ENCODE measurements at regions of chr1 and their contacts with region 1.

Region 1: DNA sequence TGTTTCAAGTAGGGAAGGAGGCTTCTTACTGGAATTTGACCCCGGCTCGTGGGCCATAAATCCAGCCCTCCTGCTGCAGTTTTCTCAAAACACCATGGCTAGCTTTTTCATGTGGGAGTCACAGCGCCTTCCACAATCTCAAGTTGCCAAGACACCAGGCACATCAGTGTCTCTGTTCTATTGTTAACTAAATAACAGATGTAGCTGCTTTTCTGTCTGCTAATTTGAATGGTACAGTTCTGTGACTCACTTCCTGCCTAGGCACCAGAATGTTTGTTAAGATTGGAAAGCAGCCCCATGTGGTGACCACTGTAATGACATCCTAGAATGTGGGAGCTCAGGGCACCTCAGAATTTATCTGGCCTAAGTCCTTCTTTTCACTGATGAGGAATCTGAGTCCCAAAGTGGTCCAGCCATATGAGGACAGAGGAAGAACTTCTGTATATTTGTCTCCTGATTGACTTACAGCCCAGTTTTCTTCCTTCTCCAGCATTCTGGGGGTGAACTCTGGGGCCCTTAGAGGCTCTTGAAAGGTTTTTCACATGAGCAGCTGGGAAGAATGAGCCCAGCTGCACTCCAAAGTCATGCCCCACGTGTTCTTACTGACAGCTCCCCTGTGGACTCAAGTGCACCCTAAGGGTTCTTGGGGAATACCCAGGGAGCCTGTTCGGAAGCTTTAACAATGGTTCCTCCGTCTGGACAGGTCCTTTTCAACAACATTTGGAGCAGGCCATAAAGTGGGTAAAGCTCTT is 27.5 kb downstream of the TRIM45 start:
- DNase-seq: peak; percentile 63
- ATAC-seq: peak; percentile 99
- H3K4me3 Mint-ChIP-seq: no peak overlapping the region
- H3K27ac Mint-ChIP-seq: peak overlapping the region; percentile 20
- H3K4me1 Mint-ChIP-seq: peaks cover 23% of the 10 kb centered on the region
- H3K27me3 Mint-ChIP-seq: no peaks in the 10 kb centered on the region
- CTCF ChIP-seq: peak; percentile 56

Region 2: GRCh38 chr1:117067533-117068370 is 26.3 kb before region 1 on chr1:
- CTCF ChIA-PET with region 1: interaction called, 19 read pairs
- POLR2A ChIA-PET with region 1: interaction called, 6 read pairs
- intact Hi-C with region 1: no loop called
- DNase-seq: peak; percentile 42
- ATAC-seq: peak; percentile 83
- H3K4me3 Mint-ChIP-seq: no peak overlapping the region
- H3K27ac Mint-ChIP-seq: no peak overlapping the region
- H3K4me1 Mint-ChIP-seq: peaks cover 40% of the 10 kb centered on the region
- H3K27me3 Mint-ChIP-seq: no peaks in the 10 kb centered on the region
- CTCF ChIP-seq: peak; percentile 62

Region 3: DNA sequence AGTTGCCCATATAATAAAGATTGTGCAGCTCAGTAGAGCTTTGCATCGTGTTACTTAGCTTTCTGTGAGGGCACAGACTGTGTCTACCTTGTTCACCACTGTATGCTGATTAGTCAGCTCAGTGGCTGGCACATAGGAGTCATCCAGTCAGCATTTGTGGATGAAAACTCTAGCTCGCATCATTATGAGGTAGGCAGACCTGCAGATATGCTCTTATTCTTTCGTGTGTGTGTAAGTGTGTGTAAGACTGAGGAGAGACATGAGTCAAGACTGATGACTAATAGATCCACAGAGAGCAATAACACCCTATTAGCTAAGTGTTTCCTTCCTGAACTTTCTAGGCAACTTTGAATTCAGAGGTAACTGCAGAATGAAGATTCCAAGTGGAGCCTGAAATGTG is 16.8 kb before region 1 on chr1:
- CTCF ChIA-PET with region 1: interaction called, 27 read pairs
- POLR2A ChIA-PET with region 1: interaction called, 5 read pairs
- intact Hi-C with region 1: no loop called
- DNase-seq: peak; percentile 70
- ATAC-seq: peak; percentile 98
- H3K4me3 Mint-ChIP-seq: no peak overlapping the region
- H3K27ac Mint-ChIP-seq: peak overlapping the region; percentile 76
- H3K4me1 Mint-ChIP-seq: peaks cover 38% of the 10 kb centered on the region
- H3K27me3 Mint-ChIP-seq: no peaks in the 10 kb centered on the region
- CTCF ChIP-seq: no peak

Region 4: DNA sequence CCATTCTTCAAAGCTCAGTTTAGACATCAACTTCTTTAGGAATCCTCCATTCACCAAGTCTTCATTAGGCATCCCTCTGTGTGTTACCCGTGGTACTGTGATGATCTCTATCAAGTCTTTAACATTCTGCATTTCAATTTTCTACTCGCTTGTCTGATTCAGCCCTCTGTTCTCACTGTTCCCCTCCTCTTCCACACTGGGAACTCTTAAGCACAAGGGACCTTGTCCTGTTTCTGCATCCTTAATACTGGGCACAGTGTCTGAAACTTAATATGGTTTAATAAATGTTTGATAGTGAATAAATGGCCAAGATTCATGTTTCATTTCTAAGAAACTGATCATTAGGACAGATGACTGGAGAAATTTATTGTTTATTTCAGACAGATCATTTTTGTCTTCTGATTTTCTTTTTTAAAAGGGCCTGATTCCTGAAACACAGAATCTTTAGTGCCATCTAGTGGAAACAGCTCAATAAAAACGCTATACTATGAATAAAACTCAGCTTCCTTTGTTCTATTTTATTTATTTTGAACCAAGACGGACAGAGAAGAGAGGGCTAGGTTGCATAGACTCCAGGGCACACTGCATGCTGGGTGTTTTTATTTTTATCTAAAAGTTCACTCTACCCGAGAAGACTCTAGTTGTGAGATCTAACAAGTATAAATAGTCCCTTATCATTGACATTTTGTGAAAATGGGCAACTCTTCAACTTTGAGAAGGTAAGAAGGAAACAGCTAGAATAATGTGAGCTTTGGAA is 34.5 kb after region 1 on chr1:
- CTCF ChIA-PET with region 1: interaction called, 21 read pairs
- POLR2A ChIA-PET with region 1: interaction called, 6 read pairs
- intact Hi-C with region 1: no loop called
- DNase-seq: no peak
- ATAC-seq: no peak
- H3K4me3 Mint-ChIP-seq: no peak overlapping the region
- H3K27ac Mint-ChIP-seq: no peak overlapping the region
- H3K4me1 Mint-ChIP-seq: no peaks in the 10 kb centered on the region
- H3K27me3 Mint-ChIP-seq: peaks cover 3% of the 10 kb centered on the region
- CTCF ChIP-seq: peak; percentile 64

Measured in activated CD8-positive, alpha-beta T cell treated with anti-CD3 and anti-CD28 coated beads for 36 hours (primary cell).